GM13976 (cell line): ENCODE measurements at regions of chr1 and their contacts with region 1.

Region 1: DNA sequence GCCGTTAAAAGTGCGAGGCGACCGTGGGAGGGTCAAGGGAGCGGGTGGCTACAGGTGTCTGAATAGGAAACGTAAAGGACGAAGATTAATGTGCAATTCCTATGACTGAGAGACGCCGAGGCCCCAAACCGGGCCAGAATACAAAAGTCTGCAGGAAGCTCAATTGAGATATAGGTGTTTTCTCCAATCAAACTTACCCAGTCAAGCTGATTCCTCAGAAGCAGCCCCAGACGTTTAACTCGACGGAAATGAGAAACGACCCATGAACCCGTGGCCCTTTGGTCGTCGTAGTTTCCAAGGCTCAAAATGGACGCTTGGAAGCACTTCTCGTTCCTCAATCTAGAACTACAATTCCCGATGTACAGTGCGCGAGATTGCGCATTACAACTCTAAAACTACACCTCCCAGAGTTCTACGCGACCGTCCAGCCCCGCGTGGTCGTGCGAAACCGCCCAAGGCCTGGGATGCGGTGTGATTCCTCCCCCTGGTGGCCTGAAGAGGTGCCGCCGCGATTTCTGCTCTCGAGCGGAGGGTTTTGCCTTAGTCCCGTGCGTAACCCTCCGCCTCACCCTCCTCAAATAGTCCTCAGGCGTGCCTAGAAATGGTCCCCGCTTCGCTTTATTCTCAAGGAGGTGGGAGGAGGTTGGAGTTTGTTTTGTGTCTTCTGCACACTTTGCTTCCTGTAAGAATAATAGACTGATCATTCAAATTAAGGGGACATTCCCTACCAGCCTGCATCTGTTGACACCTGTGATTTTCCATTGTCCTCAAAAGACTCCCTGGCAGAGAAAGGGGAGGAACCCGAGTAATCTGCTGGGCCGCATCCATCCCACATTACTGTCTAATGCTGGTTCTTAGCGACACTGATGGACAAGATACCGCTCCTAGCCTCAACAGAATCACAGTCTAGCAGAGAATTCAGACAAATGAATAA is at the start of gene PAFAH2:
- DNase-seq: peak; percentile 93
- CTCF ChIP-seq: peak; percentile 98

Region 2: GRCh38 chr1:25895365-25895993 is 102.6 kb before region 1 on chr1:
- in situ Hi-C with region 1: loop called (anchors 5 kb)
- DNase-seq: peak; percentile 95
- CTCF ChIP-seq: peak; percentile 94